ENCODE measurements at regions of chr10 and their contacts with region 1.

Region 1: GRCh38 chr10:95183271-95184230 is 10.5 kb upstream of the ACSM6 start:
- DNase-seq: peak in 1 of 2 experiments; percentile 78
- H3K4me3 ChIP-seq: peak overlapping the region; percentile 62
- H3K27ac ChIP-seq: 0 out of 2 replicates have a peak overlapping the region, but pooled peaks have one; percentile 26
- H3K4me1 ChIP-seq: no peaks in the 10 kb centered on the region
- H3K27me3 ChIP-seq: no peaks in the 10 kb centered on the region
- CTCF ChIP-seq: peak; percentile 87

Region 2: DNA sequence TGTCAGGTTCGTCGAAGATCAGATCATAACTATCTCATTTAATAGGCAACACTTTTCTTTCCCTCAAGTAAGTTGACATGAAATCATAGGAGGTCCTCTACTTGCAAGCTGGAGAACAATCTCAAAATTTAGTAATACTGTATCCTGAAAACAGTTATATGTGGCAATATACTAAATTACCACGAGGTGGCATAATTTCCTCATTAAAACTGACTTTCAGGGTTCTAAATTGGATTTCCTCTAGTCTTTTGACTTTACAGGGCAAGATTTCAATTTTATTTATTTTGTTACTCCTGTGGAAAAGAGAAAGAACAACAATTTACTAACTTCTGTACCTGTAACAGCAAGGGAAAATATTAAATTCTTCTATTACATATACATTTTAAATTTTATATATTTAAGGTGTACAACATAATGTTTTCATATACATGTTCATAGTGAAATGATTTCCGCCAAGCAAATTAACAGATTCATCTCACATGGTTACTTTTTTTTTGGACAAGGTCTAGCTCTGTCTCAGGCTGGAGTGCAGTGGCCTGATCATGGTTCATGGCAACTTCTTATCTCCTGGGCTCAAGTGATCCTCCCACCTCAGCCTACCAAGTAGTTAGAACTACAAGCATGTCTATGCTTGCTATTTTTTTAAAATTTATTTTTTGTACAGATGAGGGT is 553.4 kb before region 1 on chr10:
- CTCF ChIA-PET with region 1: no interaction called
- POLR2A ChIA-PET with region 1: no interaction called
- intact Hi-C with region 1: loop called (anchors 5 kb)
- DNase-seq: no peak
- H3K4me3 ChIP-seq: no peak overlapping the region
- H3K27ac ChIP-seq: no peak overlapping the region
- H3K4me1 ChIP-seq: no peaks in the 10 kb centered on the region
- H3K27me3 ChIP-seq: no peaks in the 10 kb centered on the region
- CTCF ChIP-seq: peak; percentile 75

Region 3: GRCh38 chr10:95133016-95133752 is 50.4 kb before region 1 on chr10:
- CTCF ChIA-PET with region 1: no interaction called
- POLR2A ChIA-PET with region 1: no interaction called
- intact Hi-C with region 1: loop called (anchors 10 kb)
- DNase-seq: peak; percentile 54 to 56
- H3K4me3 ChIP-seq: no peak overlapping the region
- H3K27ac ChIP-seq: no peak overlapping the region
- H3K4me1 ChIP-seq: no peaks in the 10 kb centered on the region
- H3K27me3 ChIP-seq: no peaks in the 10 kb centered on the region
- CTCF ChIP-seq: peak; percentile 82

Region 4: DNA sequence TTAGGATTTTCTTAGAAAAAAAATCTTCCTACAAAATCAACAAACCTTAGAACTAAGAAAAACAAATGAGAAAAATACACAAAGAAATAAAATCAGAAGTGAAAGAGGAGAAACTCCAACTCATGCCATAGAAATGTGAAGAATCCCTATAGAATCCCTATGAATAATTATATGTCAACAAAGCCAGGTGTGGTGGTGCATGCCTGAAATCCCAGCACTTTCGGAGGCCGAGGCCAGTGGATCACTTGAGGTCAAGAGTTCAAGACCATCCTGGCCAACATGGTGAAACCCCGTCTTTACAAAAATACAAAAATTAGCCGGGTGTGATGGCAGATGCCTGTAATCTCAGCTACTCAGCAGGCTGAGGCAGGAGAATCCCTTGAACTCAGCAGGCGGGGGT is 37.6 kb after region 1 on chr10:
- CTCF ChIA-PET with region 1: no interaction called
- POLR2A ChIA-PET with region 1: no interaction called
- intact Hi-C with region 1: no loop called
- DNase-seq: peak; percentile 65 to 82
- H3K4me3 ChIP-seq: no peak overlapping the region
- H3K27ac ChIP-seq: peak overlapping the region; percentile 91
- H3K4me1 ChIP-seq: peaks cover 44% of the 10 kb centered on the region
- H3K27me3 ChIP-seq: no peaks in the 10 kb centered on the region
- CTCF ChIP-seq: no peak

Region 5: DNA sequence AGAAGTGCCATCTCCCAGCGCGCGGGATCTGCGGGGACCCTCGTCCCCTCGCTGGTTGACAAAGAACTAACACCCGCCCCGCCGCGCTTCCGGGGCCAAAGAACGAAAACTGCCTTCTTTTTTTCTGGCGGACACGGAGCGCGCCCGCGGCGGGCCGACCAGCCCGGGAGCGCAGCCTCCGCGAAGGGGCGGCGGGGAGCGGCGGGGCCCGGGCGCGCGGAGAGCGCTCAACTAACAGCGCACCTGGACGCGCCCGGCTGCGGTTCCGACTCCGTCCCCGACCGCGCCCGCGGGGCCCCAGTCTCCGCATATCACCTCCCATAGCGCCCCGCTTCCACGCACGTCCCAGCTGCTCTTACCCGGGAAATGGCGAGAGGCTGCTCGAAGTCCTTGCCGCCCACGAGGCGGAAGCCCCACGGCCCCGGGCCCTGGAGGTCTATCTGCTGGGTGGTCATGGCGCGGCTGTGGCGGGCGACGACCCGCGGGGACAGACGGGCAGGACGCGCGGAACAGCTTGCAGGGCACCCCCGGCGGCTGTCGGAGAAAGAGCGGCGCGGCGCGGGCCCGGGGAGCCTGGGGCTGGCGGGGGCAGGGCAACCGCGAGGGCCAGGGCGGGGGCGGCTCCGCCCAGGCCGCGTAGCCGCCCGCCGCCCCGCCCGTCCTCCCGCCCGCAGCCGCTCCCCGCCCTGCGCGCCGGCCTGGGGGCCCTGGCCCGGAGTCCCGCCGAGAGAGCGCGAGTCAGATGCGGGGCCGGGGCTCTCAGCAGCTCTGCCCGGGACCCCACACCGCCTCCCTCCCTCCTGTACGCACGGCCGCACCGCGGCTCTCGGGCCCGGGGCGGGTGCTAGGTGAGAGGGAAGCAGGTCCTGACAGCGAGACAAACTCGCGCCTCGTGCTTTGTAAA is 107.2 kb after region 1 on chr10 and contains the start of gene PDLIM1:
- CTCF ChIA-PET with region 1: interaction called, 3 read pairs
- POLR2A ChIA-PET with region 1: interaction called, 22 read pairs
- intact Hi-C with region 1: no loop called
- DNase-seq: peak in 1 of 2 experiments; percentile 71
- H3K4me3 ChIP-seq: peak within 1 kb of the TSS; percentile 59
- H3K27ac ChIP-seq: peak within 1 kb of the TSS; percentile 23; the same call in 1 of the 2 replicates
- H3K4me1 ChIP-seq: peaks cover 31% of the 10 kb centered on the region
- H3K27me3 ChIP-seq: no peaks in the 10 kb centered on the region
- CTCF ChIP-seq: no peak
- total RNA-seq, gene PDLIM1: 202 and 215 TPM in 2 replicates

Measured in PC-9 (cell line).